ENCODE measurements at regions of chr7 and their contacts with region 1.

Region 1: GRCh38 chr7:137276189-137276588 is 67.3 kb downstream of the PTN start:
- DNase-seq: no peak
- H3K4me3 ChIP-seq: no peak overlapping the region
- H3K4me3 Mint-ChIP-seq: no peak overlapping the region
- H3K27ac Mint-ChIP-seq: no peak overlapping the region
- H3K4me1 ChIP-seq: no peaks in the 10 kb centered on the region
- H3K4me1 Mint-ChIP-seq: no peaks in the 10 kb centered on the region
- H3K27me3 ChIP-seq: no peaks in the 10 kb centered on the region
- H3K27me3 Mint-ChIP-seq: no peaks in the 10 kb centered on the region
- CTCF ChIP-seq: no peak

Region 2: GRCh38 chr7:137289101-137289500 is 12.9 kb after region 1 on chr7:
- CTCF ChIA-PET with region 1: no interaction called
- POLR2A ChIA-PET with region 1: no interaction called
- intact Hi-C with region 1: loop called (anchors 1 kb)
- DNase-seq: no peak
- H3K4me3 ChIP-seq: no peak overlapping the region
- H3K4me3 Mint-ChIP-seq: no peak overlapping the region
- H3K27ac Mint-ChIP-seq: no peak overlapping the region
- H3K4me1 ChIP-seq: no peaks in the 10 kb centered on the region
- H3K4me1 Mint-ChIP-seq: no peaks in the 10 kb centered on the region
- H3K27me3 ChIP-seq: no peaks in the 10 kb centered on the region
- H3K27me3 Mint-ChIP-seq: no peaks in the 10 kb centered on the region
- CTCF ChIP-seq: no peak

Region 3: DNA sequence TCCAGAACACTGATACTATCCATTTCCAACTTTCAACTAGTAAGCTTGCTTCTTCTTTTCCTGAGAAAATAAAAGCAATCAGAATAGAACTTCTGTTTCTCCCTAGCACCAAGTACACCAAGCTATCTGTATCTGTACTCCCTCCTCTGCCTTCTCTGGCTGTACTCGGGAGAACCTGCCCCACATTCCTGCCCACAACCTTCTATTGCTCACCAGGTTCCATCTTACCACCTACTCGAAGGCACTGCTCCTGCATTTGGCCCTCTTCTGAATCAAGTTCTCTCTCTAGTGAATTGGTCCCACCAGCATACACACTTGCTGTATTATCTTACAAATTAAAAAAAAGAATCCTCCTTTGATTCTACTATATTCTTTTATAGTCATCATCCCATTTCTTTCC is 236.9 kb after region 1 on chr7:
- CTCF ChIA-PET with region 1: no interaction called
- POLR2A ChIA-PET with region 1: no interaction called
- intact Hi-C with region 1: no loop called
- DNase-seq: no peak
- H3K4me3 ChIP-seq: no peak overlapping the region
- H3K4me3 Mint-ChIP-seq: no peak overlapping the region
- H3K27ac Mint-ChIP-seq: no peak overlapping the region
- H3K4me1 ChIP-seq: peaks cover 5% of the 10 kb centered on the region; the same call in 1 of the 2 replicates
- H3K4me1 Mint-ChIP-seq: no peaks in the 10 kb centered on the region
- H3K27me3 ChIP-seq: no peaks in the 10 kb centered on the region
- H3K27me3 Mint-ChIP-seq: peaks cover 10% of the 10 kb centered on the region
- CTCF ChIP-seq: no peak

Region 4: GRCh38 chr7:137658190-137658900 is 382.2 kb after region 1 on chr7:
- CTCF ChIA-PET with region 1: no interaction called
- POLR2A ChIA-PET with region 1: no interaction called
- intact Hi-C with region 1: no loop called
- DNase-seq: no peak
- H3K4me3 ChIP-seq: no peak overlapping the region
- H3K4me3 Mint-ChIP-seq: no peak overlapping the region
- H3K27ac Mint-ChIP-seq: no peak overlapping the region
- H3K4me1 ChIP-seq: no peaks in the 10 kb centered on the region
- H3K4me1 Mint-ChIP-seq: no peaks in the 10 kb centered on the region
- H3K27me3 ChIP-seq: no peaks in the 10 kb centered on the region
- H3K27me3 Mint-ChIP-seq: peaks cover 8% of the 10 kb centered on the region
- CTCF ChIP-seq: no peak